Posterior cingulate gyrus (tissue), 11 donors: ENCODE measurements at regions of chr10 and their contacts with region 1.

Region 1: GRCh38 chr10:106175760-106176377 is 988.6 kb downstream of the SORCS1 start:
- DNase-seq: no peak

Region 2: DNA sequence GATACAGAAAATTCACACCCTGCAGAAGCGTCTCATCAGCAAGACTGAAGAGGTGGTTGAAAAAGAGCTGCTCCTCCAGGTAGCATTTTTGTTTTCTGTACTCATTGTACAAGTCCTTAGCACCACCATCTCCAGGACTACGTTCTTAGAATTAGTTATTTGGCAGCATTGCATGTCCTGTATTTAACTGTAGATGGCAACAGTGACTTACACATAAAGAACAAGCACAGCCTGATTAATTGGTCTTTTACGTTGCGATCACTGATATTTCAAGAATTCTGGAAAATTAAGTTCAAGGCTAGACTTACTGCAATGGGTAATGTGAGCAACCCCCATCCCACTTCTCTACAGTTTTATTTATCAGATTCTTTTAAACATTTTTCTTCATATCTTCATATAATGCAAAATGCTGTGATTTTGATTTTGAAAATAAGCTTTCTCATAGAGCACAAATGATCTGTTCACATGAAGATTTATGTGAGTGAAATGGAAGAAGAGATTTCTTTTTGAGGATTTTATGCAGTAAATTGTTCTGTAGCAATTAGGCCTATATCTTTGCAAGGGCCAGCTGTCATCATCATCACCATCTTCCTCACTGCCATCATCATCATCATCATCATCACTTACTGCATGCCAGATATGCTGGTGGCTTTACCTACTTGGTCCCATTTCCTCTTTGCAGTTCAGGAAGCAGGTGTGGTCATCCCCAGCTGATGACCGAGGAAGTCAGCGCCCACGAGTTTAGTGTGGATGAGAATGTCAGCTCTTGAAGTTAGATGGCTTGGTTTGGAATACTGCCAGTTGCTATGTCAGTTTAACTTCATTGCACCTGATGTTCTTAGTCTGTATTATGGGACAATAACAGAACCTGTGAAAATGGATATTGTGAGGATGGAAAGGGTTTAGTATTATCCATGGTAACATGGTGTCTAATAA is 1768.9 kb before region 1 on chr10:
- intact Hi-C with region 1: loop called (anchors 10 kb)
- DNase-seq: no peak

Region 3: GRCh38 chr10:105797234-105797890 is 378.5 kb before region 1 on chr10:
- intact Hi-C with region 1: loop called (anchors 10 kb)
- DNase-seq: no peak

Region 4: GRCh38 chr10:106043863-106044262 is 132.0 kb before region 1 on chr10:
- intact Hi-C with region 1: no loop called
- DNase-seq: no peak